Left cardiac atrium (tissue), 4 donors: ENCODE measurements at regions of chr9 and their contacts with region 1.

Region 1: GRCh38 chr9:83334320-83334719 is 203.9 kb downstream of the FRMD3 start:
- DNase-seq: peak; percentile 84
- ATAC-seq: peak; percentile 94 to 95

Region 2: GRCh38 chr9:83219152-83219923 is 115.0 kb before region 1 on chr9:
- intact Hi-C with region 1: loop called in 1 of 2 experiments (anchors 5 kb)
- DNase-seq: peak; percentile 84
- ATAC-seq: peak; percentile 97 to 98

Region 3: GRCh38 chr9:83538172-83538889 is 204.0 kb after region 1 on chr9 and contains the start of gene FRMD3:
- intact Hi-C with region 1: loop called (anchors 1 to 10 kb)
- DNase-seq: peak; percentile 89
- ATAC-seq: peak; percentile 96 to 97
- total RNA-seq, gene FRMD3: 40.0 to 63.6 TPM

Region 4: DNA sequence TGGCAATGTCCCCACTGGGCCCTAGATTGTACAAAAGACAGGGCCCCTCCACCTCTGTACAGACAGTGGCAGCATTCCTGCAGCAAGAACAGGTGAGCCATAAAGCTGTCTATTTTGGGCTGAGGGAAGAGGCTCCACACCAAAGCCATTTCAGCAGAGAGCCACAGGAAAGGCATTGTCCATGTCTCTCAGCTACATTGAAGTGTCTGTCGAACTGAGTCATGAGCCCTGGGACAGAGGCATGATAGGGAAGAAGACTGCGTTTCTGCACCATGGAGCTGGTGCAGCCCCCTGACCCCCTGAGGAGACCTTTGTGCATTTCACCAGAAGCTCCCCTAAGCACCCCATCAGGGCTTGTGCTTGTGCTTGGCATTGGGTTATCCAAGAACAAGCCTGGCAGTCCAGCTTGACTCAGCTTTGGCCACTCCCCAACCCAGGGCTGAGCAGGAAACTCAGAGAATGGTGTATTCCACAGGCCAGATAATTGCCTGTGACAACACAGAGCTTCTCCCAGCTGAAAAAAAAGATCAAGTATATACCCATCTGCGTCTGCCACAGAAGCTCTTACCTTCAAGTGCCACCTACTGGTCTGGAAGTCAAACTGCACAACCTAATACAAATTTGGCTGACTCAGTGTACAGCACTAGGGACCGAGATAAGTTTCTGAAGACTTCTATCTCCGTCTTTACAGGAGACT is 209.8 kb after region 1 on chr9:
- intact Hi-C with region 1: loop called (anchors 1 to 10 kb)
- DNase-seq: peak; percentile 53
- ATAC-seq: peak; percentile 88 to 95

Region 5: DNA sequence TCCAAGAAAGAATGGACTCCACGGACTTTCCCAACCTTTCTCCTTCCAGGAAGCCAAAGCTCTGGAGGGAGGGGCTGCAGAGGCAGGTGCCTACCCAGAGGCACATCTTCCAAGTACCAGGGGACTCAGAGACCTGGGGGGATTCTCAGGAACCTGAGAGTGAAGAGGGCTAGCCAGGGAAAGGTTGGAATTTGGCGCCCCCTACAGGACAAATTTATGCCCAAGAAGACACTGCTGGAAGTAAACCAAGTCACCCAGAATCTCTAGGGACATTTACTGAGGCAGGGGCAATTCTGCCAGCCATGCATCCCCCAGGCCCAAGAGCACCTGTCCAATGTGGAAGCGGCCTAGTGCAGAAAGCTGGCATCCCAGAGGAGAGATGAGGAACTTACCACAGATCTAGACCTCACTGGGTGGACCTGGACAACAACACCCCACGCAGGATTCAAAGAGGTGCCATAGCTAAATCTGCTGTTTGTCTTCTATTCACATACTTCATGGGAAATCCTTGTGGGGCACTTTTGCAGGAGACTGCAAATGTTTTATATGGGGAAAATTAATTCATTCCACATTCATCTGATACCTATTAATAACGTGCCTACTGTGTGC is 262.7 kb after region 1 on chr9:
- intact Hi-C with region 1: loop called in 1 of 2 experiments (anchors 10 kb)
- DNase-seq: no peak
- ATAC-seq: peak; percentile 27 to 38